ENCODE measurements at regions of chr7 and their contacts with region 1.

Region 1: DNA sequence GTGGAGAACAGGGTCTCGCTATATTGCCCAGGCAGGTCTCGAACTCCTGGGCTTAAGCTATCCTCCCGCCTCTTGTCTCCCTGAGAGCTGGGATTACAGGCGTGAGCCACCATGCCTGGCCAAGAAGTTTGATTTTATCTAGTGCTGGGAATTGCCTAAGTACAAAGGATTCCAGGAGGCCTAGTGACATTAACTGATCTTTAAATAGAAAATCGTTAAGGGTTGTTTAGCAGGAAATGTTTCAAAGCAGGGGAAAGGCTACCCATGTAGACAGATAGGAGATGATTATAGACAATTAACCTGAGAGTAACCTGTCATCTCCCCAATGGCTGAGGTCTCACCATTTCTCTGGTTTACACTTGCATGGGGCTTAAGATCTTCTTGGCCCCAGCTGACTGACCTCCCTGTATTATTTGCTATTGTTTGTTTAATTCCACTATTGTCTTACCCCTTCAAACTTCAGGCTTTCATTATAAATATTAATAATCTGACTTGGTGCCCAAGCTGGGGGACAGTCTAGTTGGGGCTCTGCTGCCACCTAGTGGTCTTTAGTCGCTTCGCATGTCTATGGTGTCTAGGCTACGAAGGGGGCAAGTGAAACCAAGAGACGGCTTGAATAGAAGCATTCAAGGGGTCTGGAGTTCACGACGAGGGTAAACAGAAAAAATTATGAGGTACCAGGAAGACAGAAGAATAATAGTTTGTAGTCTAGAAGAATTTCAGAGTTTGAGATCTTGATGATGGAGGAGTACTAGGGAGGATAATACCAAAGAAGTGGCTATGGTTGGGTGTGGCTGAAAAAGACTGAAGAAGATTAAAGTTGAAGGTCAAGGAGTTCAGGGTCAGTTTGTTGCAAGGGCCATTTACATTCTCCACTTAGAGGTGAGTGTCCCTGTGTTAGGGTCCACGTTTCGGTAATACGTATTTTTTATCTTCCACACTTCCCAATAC is 40.4 kb upstream of the BPGM start:
- DNase-seq: peak; percentile 23 to 93 (median 76)

Region 2: GRCh38 chr7:134432296-134433152 is 173.7 kb before region 1 on chr7:
- intact Hi-C with region 1: loop called (anchors 5 kb)
- DNase-seq: peak; percentile 65 to 93 (median 81)

Region 3: GRCh38 chr7:134514663-134515062 is 91.6 kb before region 1 on chr7:
- intact Hi-C with region 1: loop called (anchors 5 kb)
- DNase-seq: peak in 15 of 42 donors; percentile 17 to 78 (median 44)

Region 4: DNA sequence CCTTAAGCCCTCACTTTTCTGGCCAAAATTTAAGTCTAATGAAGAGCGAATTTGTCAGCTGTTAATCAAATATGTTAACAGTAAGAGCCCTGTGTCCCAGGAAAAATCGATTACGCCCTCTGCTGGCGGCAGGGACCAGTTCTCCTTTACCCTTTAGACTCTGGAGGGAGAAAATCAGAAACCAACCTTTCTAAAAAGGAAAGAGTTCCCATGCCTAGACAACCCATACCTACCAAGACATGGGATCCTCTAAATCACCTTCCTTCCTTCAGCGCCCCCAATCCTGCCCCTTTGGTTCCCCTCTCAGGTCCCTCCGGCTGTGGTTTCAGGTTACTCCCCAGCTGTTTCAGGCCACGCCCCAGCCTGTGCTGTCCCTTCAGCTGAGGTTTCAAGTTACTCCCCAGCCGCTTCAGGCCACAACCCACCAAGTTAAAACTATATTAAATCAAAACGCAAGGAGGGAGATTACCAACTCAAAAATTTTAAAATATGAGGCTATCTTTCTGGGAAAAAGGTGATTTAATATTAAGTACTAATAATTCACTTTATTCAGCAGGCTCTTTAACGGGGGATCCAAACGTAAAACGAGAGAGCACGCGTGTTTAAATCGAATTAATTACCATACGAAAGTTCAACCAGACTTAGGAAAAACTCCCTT is 58.7 kb before region 1 on chr7:
- intact Hi-C with region 1: loop called (anchors 10 kb)
- DNase-seq: peak; percentile 51 to 93 (median 82)

Measured in head of caudate nucleus (tissue), 42 donors.